Posterior vena cava (tissue), 2 donors: ENCODE measurements at regions of chr10 and their contacts with region 1.

Region 1: DNA sequence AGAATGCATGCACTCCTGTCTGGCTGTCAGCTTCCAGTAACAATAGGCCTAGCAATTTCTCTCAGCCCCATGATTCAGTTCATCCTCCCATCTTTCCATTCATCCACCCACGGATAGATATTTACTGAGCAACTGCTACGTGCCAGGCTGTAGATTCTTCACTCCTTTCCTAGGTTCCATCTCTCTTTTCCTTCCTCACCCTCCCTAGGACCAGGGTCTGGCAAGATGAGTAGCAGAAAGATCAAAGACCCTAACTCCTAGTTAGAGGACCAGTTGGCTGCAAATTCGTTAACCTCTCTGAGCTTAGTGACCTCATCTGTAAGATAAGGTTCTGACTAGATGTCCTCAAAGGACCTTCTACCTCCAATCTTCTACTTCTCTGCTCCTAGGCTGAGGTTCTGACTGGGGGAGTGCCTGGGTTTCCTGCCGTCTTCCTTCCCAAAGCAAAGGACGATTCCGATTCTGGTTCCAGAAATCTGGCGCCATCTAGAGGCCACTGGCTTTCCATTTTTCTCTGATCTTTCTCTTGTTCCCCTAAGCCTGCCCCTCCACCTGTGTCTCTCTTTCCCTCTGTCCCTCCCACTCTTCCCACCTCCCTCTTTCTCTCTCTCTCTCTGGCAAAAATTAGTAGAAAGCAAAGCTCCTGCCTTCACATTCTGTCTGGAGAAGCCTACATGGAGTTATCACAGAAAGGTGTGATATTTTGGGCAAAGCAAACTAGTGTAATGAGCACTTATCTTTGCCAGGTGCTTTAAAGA is 26.2 kb downstream of the TBATA start:
- DNase-seq: peak; percentile 77

Region 2: GRCh38 chr10:70478191-70479164 is 280.5 kb before region 1 on chr10 and contains the start of gene PALD1:
- intact Hi-C with region 1: loop called in 1 of 2 experiments (anchors 10 kb)
- DNase-seq: peak; percentile 90
- total RNA-seq, gene PALD1: 6.7 to 7.4 TPM

Region 3: DNA sequence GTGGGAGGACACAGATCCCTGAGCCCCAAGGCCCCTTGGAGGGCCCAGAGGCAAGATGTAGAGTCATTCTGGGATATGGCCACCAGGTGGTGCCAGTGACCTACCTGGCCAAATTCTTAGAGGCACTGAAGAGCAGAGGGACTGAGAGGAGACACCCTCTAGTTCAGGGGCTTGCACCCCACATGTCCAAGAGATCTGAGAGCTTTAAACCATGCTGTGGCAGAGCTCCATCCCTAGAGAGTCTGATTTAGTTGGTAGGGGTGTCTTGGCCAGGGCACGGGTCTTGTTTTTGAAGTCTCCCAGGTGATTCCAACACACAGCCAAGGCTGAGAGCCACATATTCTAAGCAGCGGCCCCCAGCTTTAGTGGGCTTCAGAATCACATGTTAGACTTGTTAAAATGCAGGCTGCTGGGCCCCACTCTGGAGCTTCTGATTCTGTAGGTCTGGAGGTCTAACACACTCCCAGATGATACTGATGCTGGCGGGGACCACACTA is 208.9 kb before region 1 on chr10:
- intact Hi-C with region 1: loop called (anchors 5 kb)
- DNase-seq: no peak